Endothelial cell of umbilical vein (primary cell): ENCODE measurements at regions of chr4 and their contacts with region 1.

Region 1: GRCh38 chr4:16794816-16795445 is 103.5 kb downstream of the LDB2 start:
- DNase-seq: peak; percentile 83
- H3K4me3 ChIP-seq: no peak overlapping the region
- H3K27ac ChIP-seq: no peak overlapping the region
- H3K4me1 ChIP-seq: peaks cover 19% of the 10 kb centered on the region
- H3K27me3 ChIP-seq: no peaks in the 10 kb centered on the region
- CTCF ChIP-seq: peak; percentile 90 to 91
- POLR2A ChIP-seq: no peak

Region 2: DNA sequence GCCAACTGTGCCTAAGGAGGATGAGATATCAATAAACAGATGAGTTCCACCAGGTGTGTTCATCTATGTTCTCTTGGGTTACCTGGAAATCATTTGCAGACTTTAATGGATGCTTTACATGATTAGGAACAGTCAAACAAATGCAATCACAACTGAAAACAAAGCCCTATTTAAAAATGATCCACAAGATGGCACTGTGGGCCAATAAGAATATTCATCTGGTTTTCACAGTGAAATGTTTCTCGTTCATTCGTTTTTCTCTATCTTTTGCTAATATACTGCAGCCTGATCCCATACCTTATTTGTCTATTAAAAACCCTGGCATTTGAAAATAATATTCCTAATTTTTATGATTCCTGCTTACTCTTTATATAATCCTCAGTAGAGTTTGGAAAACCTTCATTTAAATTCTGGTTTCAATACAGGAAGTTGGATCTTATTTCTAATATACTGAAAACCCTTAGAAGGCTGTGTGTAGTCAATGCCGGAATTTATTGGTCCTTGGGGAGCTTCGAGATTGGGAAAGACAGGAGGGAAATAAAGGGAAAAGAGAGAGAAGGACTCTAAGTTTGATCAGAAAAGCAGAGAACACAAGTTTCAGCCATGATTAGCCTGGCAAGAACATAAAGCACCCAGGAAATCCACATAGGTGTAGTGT is 504.9 kb before region 1 on chr4:
- CTCF ChIA-PET with region 1: no interaction called
- POLR2A ChIA-PET with region 1: no interaction called
- dilution Hi-C with region 1: no loop called
- intact Hi-C with region 1: loop called (anchors 5 kb)
- DNase-seq: peak; percentile 69
- H3K4me3 ChIP-seq: no peak overlapping the region
- H3K27ac ChIP-seq: no peak overlapping the region
- H3K4me1 ChIP-seq: no peaks in the 10 kb centered on the region
- H3K27me3 ChIP-seq: peaks cover 12 to 18% of the 10 kb centered on the region in 2 experiments
- CTCF ChIP-seq: peak; percentile 27 to 41
- POLR2A ChIP-seq: no peak

Region 3: GRCh38 chr4:16807355-16807754 is 12.4 kb after region 1 on chr4:
- CTCF ChIA-PET with region 1: interaction called, 10 read pairs
- POLR2A ChIA-PET with region 1: no interaction called
- dilution Hi-C with region 1: no loop called
- intact Hi-C with region 1: no loop called
- DNase-seq: no peak
- H3K4me3 ChIP-seq: no peak overlapping the region
- H3K27ac ChIP-seq: no peak overlapping the region
- H3K4me1 ChIP-seq: peaks cover 5% of the 10 kb centered on the region
- H3K27me3 ChIP-seq: no peaks in the 10 kb centered on the region
- CTCF ChIP-seq: no peak
- POLR2A ChIP-seq: no peak

Region 4: GRCh38 chr4:16858275-16858752 is 63.4 kb after region 1 on chr4:
- CTCF ChIA-PET with region 1: interaction called, 4 read pairs
- POLR2A ChIA-PET with region 1: no interaction called
- dilution Hi-C with region 1: no loop called
- intact Hi-C with region 1: loop called (anchors 1 kb)
- DNase-seq: peak; percentile 98
- H3K4me3 ChIP-seq: peak overlapping the region in 1 of 3 experiments; percentile 18
- H3K27ac ChIP-seq: peak overlapping the region; percentile 79
- H3K4me1 ChIP-seq: peaks cover 64% of the 10 kb centered on the region
- H3K27me3 ChIP-seq: no peaks in the 10 kb centered on the region
- CTCF ChIP-seq: no peak
- POLR2A ChIP-seq: peak; percentile 65

Region 5: DNA sequence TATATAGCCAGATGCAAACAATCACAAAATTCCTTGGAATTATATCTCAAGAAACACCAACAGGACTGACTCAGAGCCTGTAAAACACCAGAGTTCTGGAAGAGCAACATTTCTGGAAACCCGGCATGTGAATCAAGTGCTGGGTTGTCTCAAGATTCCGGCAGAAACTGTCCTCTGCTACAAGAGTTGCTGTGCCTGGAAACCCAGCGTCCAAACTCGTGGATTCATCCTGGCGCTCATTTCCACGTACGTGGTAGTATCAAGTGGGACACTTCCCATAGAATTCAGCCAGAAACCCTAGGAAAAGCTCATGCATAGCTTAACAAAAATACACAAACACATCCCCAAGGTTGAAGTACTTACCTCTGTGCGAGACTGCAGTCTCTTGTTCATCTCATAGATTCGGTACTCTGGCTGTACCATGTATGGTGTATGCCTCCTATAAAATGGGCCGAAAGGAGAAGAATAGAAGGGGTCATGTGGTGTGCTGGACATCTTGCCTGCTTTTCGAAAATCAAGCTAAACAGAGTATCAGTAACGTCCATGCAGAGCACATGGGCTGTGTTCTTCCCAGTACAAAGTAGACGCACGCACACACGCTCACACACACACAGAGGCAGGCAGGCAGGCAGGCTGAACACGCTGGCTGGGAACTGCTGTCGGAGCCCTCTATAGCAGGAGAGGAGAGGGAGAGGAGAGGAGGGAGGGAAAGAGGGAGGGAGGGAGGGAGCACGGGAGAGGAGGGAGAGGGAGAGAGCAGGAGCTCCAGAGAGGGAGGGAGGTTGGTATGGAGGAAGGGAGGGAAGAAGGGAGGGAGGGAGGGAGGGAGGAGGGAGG is 103.3 kb after region 1 on chr4 and contains the start of gene LDB2:
- CTCF ChIA-PET with region 1: interaction called, 20 read pairs
- POLR2A ChIA-PET with region 1: no interaction called
- dilution Hi-C with region 1: no loop called
- intact Hi-C with region 1: loop called (anchors 1 kb)
- DNase-seq: peak; percentile 88
- H3K4me3 ChIP-seq: peak within 1 kb of the TSS; percentile 66 to 97 (median 86)
- H3K27ac ChIP-seq: peak within 1 kb of the TSS; percentile 59
- H3K4me1 ChIP-seq: peaks cover 38% of the 10 kb centered on the region
- H3K27me3 ChIP-seq: no peaks in the 10 kb centered on the region
- CTCF ChIP-seq: no peak
- POLR2A ChIP-seq: no peak
- total RNA-seq, gene LDB2: 80.9 and 127 TPM in 2 replicates

Region 6: GRCh38 chr4:17027495-17027894 is 232.6 kb after region 1 on chr4:
- CTCF ChIA-PET with region 1: no interaction called
- POLR2A ChIA-PET with region 1: no interaction called
- dilution Hi-C with region 1: no loop called
- intact Hi-C with region 1: loop called (anchors 10 kb)
- DNase-seq: peak; percentile 87
- H3K4me3 ChIP-seq: no peak overlapping the region
- H3K27ac ChIP-seq: peak overlapping the region; percentile 48
- H3K4me1 ChIP-seq: peaks cover 33% of the 10 kb centered on the region
- H3K27me3 ChIP-seq: no peaks in the 10 kb centered on the region
- CTCF ChIP-seq: no peak
- POLR2A ChIP-seq: no peak

Region 7: DNA sequence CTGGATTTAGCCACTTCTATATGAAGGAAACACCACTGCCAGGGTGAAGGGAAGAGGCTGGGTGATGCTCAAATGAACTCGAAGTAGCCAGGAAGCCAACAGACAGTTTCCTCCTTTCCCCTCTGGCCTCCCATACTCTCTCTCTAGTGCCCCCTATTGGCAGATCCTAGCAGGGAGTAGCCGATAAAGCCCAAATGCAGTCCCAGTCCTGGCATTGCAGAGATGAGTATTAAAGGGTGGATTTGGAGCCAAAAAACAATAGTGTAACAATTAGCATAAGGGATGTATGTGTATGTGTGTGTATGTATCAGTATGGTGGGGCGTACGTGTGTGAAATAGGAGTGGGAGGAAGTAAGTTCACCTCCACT is 317.3 kb after region 1 on chr4:
- CTCF ChIA-PET with region 1: interaction called, 3 read pairs
- POLR2A ChIA-PET with region 1: no interaction called
- dilution Hi-C with region 1: no loop called
- intact Hi-C with region 1: loop called (anchors 2 kb)
- DNase-seq: no peak
- H3K4me3 ChIP-seq: no peak overlapping the region
- H3K27ac ChIP-seq: no peak overlapping the region
- H3K4me1 ChIP-seq: no peaks in the 10 kb centered on the region
- H3K27me3 ChIP-seq: no peaks in the 10 kb centered on the region
- CTCF ChIP-seq: peak; percentile 44 to 52
- POLR2A ChIP-seq: no peak